Mammary epithelial cell (primary cell): ENCODE measurements at regions of chr18 and their contacts with region 1.

Region 1: GRCh38 chr18:41144441-41144840 is 810.6 kb upstream of the PIK3C3 start:
- DNase-seq: peak; percentile 75
- H3K4me3 ChIP-seq: no peak overlapping the region
- H3K27ac ChIP-seq: peak overlapping the region; percentile 79
- H3K4me1 ChIP-seq: peaks cover 26% of the 10 kb centered on the region
- H3K27me3 ChIP-seq: no peaks in the 10 kb centered on the region
- CTCF ChIP-seq: no peak

Region 2: DNA sequence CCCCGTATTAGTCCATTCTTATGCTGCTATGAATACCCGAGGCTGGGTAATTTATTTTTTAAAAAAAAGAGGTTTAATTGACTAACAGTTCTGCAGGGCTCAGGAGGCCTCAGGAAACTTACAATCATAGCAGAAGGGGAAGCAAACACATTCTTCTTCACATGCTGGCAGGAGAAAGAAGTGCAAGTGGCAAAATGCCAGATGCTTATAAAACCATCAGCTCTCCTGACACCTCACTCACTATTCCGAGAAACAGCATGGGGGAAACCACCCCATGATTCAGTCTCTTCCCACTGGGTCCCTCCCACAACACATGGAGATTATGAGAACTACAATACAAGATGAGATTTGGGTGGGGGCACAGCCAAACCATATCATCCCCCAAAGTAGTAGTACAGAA is 1337.9 kb before region 1 on chr18:
- CTCF ChIA-PET with region 1: no interaction called
- dilution Hi-C with region 1: no loop called
- in situ Hi-C with region 1: no loop called
- intact Hi-C with region 1: no loop called
- DNase-seq: peak; percentile 41
- H3K4me3 ChIP-seq: no peak overlapping the region
- H3K27ac ChIP-seq: no peak overlapping the region
- H3K4me1 ChIP-seq: no peaks in the 10 kb centered on the region
- H3K27me3 ChIP-seq: no peaks in the 10 kb centered on the region
- CTCF ChIP-seq: no peak

Region 3: GRCh38 chr18:40565805-40566509 is 578.5 kb before region 1 on chr18:
- CTCF ChIA-PET with region 1: no interaction called
- dilution Hi-C with region 1: no loop called
- in situ Hi-C with region 1: no loop called
- intact Hi-C with region 1: no loop called
- DNase-seq: no peak
- H3K4me3 ChIP-seq: no peak overlapping the region
- H3K27ac ChIP-seq: no peak overlapping the region
- H3K4me1 ChIP-seq: no peaks in the 10 kb centered on the region
- H3K27me3 ChIP-seq: no peaks in the 10 kb centered on the region
- CTCF ChIP-seq: no peak

Region 4: GRCh38 chr18:41126541-41127235 is 17.8 kb before region 1 on chr18:
- CTCF ChIA-PET with region 1: no interaction called
- dilution Hi-C with region 1: no loop called
- in situ Hi-C with region 1: no loop called
- intact Hi-C with region 1: loop called (anchors 2 kb)
- DNase-seq: peak; percentile 79
- H3K4me3 ChIP-seq: no peak overlapping the region
- H3K27ac ChIP-seq: peak overlapping the region; percentile 85
- H3K4me1 ChIP-seq: peaks cover 35% of the 10 kb centered on the region
- H3K27me3 ChIP-seq: no peaks in the 10 kb centered on the region
- CTCF ChIP-seq: no peak